Right ventricle myocardium superior (tissue), 1 donor: ENCODE measurements at regions of chr19 and their contacts with region 1.

Region 1: GRCh38 chr19:11380653-11381534 is 3.2 kb downstream of the EPOR start:
- DNase-seq: peak; percentile 96
- ATAC-seq: peak; percentile 91

Region 2: GRCh38 chr19:11435058-11435832 is 54.4 kb after region 1 on chr19 and contains the starts of genes ODAD3 and PRKCSH:
- intact Hi-C with region 1: loop called (anchors 10 kb)
- DNase-seq: peak; percentile 99
- ATAC-seq: peak; percentile 99
- total RNA-seq, gene ODAD3: 0.65 TPM
- total RNA-seq, gene PRKCSH: 105 TPM